Activated CD4-positive, alpha-beta memory T cell treated with anti-CD3 and anti-CD28 coated beads, Interleukin-2, amount 10 ng/mL, durations not matched to agents 7 days and 5 days (primary cell): ENCODE measurements at regions of chr10 and their contacts with region 1.

Region 1: GRCh38 chr10:110918643-110919363 is at the start of gene BBIP1:
- DNase-seq: no peak
- H3K4me3 Mint-ChIP-seq: peak within 1 kb of the TSS; percentile 90
- H3K27ac Mint-ChIP-seq: peak within 1 kb of the TSS; percentile 97
- H3K4me1 Mint-ChIP-seq: peaks cover 40% of the 10 kb centered on the region
- H3K27me3 Mint-ChIP-seq: no peaks in the 10 kb centered on the region
- total RNA-seq, gene BBIP1: 24.8 to 30.2 TPM

Region 2: DNA sequence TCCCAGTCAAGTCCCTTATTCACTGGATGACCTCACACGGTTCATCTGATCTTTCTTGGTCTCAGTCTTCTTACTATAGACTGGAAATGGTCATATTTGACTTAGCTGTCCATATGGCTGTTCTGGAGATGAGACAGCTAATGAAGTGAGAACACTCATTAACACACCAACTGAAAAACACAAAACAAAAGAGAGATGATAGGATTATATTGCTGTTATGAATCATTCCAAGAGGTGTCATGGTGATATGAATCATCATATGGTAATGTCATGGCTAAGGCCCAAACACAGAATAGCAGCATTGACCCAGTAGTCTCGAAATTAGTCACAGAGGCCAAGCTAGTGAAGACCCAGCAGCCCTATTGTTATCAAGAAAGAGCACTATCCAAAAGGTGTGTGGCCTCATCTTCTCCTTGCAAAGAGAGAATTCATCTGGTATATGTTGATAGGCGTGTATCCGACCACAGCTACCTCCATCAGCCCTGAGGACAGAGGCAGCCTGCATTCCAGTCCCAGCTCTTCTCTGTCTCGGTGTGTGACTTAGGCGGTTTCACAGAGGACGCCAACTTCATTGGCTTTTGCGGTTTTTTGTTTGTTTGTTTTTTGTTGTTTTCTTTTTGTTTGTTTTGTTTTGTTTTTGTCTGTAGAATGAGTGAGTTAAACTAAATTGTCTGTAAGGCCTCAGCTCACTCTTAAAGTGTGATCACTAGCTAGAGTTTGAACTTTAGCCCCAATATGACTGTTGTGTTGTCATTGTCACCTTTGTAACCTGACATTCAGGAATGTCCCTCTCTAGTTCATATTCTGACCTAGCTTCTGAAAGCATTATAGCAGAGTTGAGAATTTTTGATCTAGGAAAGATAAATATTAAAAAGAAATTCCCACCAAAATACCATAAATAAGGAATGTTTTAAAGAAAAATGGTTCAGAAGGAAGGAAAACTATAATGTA is 144.5 kb before region 1 on chr10:
- CTCF ChIA-PET with region 1: no interaction called
- POLR2A ChIA-PET with region 1: interaction called, 14 read pairs
- DNase-seq: peak; percentile 64
- H3K4me3 Mint-ChIP-seq: no peak overlapping the region
- H3K27ac Mint-ChIP-seq: peak overlapping the region; percentile 89
- H3K4me1 Mint-ChIP-seq: peaks cover 23% of the 10 kb centered on the region
- H3K27me3 Mint-ChIP-seq: peaks cover 2% of the 10 kb centered on the region

Region 3: DNA sequence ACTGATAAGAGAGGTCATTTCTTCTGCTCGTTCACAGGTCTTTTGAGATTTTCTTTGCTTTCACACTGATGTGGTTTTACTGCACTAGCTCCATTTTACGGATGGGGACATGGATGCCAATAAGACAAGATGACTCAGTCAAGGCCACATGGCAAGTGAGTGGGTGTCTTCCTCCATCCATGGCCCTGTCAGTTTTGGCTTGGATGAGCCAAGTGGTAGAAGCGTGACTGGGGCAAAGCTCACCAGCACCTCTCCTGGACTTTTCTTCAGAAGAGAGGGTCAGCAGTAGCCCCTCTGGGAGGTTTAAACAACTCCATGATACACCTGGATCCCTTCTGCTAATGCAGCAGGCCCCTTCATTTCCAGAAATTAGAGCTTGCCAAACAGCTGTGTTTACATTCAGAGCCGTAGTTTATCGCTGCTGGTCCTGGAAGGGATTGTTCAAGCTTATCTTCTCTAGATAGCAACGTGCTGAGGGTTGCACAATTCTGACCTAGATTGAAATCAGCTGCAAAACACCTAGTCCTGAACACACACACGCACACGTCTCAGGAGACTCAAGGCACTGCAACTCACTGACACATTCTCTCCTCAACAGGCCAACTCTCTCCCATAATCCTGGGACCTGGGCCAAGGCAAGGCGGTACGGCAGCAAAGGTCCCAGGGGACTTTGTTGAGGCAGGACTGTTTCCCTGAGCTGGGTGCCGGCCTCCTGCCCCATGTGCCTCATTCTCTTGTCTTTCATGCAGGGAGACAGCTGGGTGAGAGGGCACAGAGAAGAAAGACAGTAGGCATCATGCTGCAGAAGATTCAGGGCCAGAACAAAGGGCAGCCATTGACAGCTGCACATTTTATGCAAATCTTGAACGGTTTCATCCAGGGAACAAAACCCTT is 61.3 kb before region 1 on chr10:
- CTCF ChIA-PET with region 1: interaction called, 5 read pairs
- POLR2A ChIA-PET with region 1: interaction called, 32 read pairs
- DNase-seq: peak; percentile 51
- H3K4me3 Mint-ChIP-seq: peak overlapping the region; percentile 6
- H3K27ac Mint-ChIP-seq: peak overlapping the region; percentile 83
- H3K4me1 Mint-ChIP-seq: peaks cover 81% of the 10 kb centered on the region
- H3K27me3 Mint-ChIP-seq: no peaks in the 10 kb centered on the region

Region 4: DNA sequence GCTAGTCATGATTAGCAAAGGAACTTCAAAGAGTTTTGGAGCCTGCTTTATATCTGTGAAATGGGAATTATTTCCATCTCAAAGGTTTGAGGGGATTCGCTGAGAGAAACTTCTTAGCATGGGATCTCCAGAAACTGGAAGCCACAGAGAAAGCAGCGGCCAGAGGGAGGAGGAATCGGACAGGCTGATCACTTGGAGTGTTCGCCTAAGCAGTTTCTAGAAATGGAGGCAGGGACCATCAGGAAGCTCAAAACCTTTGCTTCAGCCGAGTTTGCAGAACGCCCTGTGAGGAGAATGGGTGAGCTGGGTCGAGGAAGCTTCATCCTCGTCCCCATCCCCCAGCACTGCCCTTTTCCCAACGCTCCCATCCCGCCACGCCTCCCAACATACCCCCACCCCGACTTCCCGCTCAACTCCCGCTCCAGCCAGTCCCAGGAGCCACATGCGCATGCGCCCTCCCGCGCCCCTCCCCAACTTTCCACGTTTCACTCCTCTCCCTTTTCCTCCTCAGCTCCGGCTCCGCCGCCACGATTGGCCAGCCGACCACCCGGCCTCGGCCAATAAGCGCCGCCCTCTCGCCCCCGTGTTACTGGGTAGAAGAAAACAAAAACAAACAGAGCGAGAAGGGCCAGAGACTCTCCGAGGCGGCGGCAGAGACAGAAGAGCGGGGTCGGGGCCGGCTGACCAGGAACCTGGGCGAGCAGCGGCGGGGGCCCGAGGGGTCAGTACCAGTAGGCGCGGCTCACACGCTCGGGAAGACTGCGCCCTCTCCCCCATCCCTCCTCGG is 47.3 kb before region 1 on chr10 and contains the start of gene PDCD4:
- CTCF ChIA-PET with region 1: interaction called, 4 read pairs
- POLR2A ChIA-PET with region 1: interaction called, 41 read pairs
- DNase-seq: peak; percentile 96
- H3K4me3 Mint-ChIP-seq: peak within 1 kb of the TSS; percentile 90
- H3K27ac Mint-ChIP-seq: peak within 1 kb of the TSS; percentile 94
- H3K4me1 Mint-ChIP-seq: peaks cover 66% of the 10 kb centered on the region
- H3K27me3 Mint-ChIP-seq: no peaks in the 10 kb centered on the region
- total RNA-seq, gene PDCD4: 105 to 109 TPM

Region 5: DNA sequence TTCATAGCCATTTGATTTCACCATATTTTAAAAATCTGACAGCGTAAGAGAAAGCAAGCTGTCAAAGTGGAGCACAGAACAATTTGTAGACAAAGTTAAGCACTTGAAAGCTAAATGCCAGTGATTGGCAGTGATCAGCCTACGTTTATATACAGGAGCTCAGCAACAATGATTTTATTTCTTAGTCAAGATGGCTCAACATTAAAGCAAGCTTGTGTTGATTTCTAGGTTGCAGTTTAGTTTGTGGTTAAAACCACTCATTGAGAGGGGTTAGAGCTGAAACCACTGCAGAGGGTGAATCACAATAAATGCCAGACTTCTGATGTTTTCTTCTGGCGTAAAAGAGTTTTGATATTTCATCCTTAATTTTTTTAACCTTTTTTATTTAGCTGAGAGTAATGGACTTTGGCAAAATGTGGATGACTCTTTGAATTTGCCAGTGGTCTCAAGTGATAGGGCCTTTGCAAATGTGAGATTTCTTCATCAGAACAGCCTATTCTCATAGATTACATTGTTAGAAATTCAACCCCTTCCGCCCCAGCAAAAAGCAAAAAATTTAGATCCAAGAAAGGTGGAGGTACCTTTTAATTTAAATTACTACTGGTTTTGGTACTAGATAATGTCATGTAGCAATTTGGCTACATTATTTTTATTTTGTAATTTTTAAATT is 74.4 kb after region 1 on chr10:
- CTCF ChIA-PET with region 1: no interaction called
- POLR2A ChIA-PET with region 1: interaction called, 10 read pairs
- DNase-seq: peak; percentile 24
- H3K4me3 Mint-ChIP-seq: peak overlapping the region; percentile 11
- H3K27ac Mint-ChIP-seq: no peak overlapping the region
- H3K4me1 Mint-ChIP-seq: peaks cover 25% of the 10 kb centered on the region
- H3K27me3 Mint-ChIP-seq: no peaks in the 10 kb centered on the region

Region 6: GRCh38 chr10:111233439-111233838 is 314.6 kb after region 1 on chr10:
- CTCF ChIA-PET with region 1: no interaction called
- POLR2A ChIA-PET with region 1: no interaction called
- DNase-seq: no peak
- H3K4me3 Mint-ChIP-seq: no peak overlapping the region
- H3K27ac Mint-ChIP-seq: no peak overlapping the region
- H3K4me1 Mint-ChIP-seq: no peaks in the 10 kb centered on the region
- H3K27me3 Mint-ChIP-seq: no peaks in the 10 kb centered on the region